BJ (cell line): ENCODE measurements at regions of chr4 and their contacts with region 1.

Region 1: GRCh38 chr4:118865091-118865708 is 23.5 kb upstream of the SYNPO2 start:
- DNase-seq: no peak
- H3K4me3 ChIP-seq: no peak overlapping the region
- H3K27me3 ChIP-seq: no peaks in the 10 kb centered on the region
- CTCF ChIP-seq: peak; percentile 84

Region 2: GRCh38 chr4:118835571-118836300 is 29.5 kb before region 1 on chr4 and contains the start of gene SEC24D:
- CTCF ChIA-PET with region 1: interaction called, 15 read pairs
- POLR2A ChIA-PET with region 1: no interaction called
- DNase-seq: no peak
- H3K4me3 ChIP-seq: peak within 1 kb of the TSS; percentile 93
- H3K27me3 ChIP-seq: no peaks in the 10 kb centered on the region
- CTCF ChIP-seq: no peak
- polyA plus RNA-seq, gene SEC24D: 80.3 and 84.3 TPM in 2 replicates

Region 3: GRCh38 chr4:118850488-118851173 is 14.6 kb before region 1 on chr4:
- CTCF ChIA-PET with region 1: interaction called, 18 read pairs
- POLR2A ChIA-PET with region 1: no interaction called
- DNase-seq: no peak
- H3K4me3 ChIP-seq: peak overlapping the region; percentile 17
- H3K27me3 ChIP-seq: no peaks in the 10 kb centered on the region
- CTCF ChIP-seq: no peak

Region 4: DNA sequence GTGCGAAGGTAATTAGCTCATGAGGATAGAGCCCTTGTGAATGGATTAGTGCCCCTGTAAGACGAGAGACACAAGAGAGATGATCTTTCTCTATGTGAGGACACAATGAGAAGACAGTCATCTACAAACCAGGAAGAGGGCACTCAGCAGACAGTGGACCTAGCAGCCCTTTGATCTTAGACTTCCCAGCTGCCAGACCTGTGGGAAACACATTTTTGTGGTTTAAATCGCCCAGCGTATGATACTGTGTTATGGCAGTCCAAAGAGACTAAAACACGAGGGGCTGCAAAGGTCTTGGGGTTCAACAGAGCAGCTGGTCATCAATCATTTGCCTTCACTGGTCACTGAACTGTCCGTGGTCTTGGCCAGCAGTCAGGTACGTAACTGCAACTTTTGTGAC is 14.2 kb after region 1 on chr4:
- CTCF ChIA-PET with region 1: interaction called, 14 read pairs
- POLR2A ChIA-PET with region 1: no interaction called
- DNase-seq: no peak
- H3K4me3 ChIP-seq: no peak overlapping the region
- H3K27me3 ChIP-seq: no peaks in the 10 kb centered on the region; the same call in 1 of the 2 replicates
- CTCF ChIP-seq: no peak

Region 5: DNA sequence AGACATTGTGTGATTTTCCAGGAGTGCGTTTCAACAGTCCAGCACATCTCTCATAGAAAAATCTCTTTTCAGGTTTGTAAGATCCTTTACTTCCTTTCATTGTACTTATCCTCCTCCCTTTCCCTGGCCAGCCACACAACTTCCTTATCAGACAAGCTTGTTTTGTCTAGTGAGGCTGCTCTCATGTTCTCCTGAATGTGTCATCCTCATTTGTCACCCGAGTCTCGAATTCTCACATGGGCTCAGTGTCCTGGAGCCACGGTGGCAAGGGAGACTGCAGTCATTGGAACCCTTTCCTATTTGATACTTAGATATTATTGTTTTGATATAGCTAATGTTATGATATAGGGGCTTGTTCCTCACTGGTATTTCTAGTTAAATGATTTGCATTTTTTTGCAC is 40.4 kb after region 1 on chr4:
- CTCF ChIA-PET with region 1: no interaction called
- POLR2A ChIA-PET with region 1: no interaction called
- DNase-seq: no peak
- H3K4me3 ChIP-seq: no peak overlapping the region
- H3K27me3 ChIP-seq: no peaks in the 10 kb centered on the region
- CTCF ChIP-seq: no peak

Region 6: GRCh38 chr4:119034276-119035008 is 169.2 kb after region 1 on chr4:
- CTCF ChIA-PET with region 1: no interaction called
- POLR2A ChIA-PET with region 1: no interaction called
- DNase-seq: no peak
- H3K4me3 ChIP-seq: no peak overlapping the region
- H3K27me3 ChIP-seq: no peaks in the 10 kb centered on the region
- CTCF ChIP-seq: no peak; the same call in 1 of the 2 replicates